Ascending aorta (tissue), 2 donors: ENCODE measurements at regions of chr2 and their contacts with region 1.

Region 1: DNA sequence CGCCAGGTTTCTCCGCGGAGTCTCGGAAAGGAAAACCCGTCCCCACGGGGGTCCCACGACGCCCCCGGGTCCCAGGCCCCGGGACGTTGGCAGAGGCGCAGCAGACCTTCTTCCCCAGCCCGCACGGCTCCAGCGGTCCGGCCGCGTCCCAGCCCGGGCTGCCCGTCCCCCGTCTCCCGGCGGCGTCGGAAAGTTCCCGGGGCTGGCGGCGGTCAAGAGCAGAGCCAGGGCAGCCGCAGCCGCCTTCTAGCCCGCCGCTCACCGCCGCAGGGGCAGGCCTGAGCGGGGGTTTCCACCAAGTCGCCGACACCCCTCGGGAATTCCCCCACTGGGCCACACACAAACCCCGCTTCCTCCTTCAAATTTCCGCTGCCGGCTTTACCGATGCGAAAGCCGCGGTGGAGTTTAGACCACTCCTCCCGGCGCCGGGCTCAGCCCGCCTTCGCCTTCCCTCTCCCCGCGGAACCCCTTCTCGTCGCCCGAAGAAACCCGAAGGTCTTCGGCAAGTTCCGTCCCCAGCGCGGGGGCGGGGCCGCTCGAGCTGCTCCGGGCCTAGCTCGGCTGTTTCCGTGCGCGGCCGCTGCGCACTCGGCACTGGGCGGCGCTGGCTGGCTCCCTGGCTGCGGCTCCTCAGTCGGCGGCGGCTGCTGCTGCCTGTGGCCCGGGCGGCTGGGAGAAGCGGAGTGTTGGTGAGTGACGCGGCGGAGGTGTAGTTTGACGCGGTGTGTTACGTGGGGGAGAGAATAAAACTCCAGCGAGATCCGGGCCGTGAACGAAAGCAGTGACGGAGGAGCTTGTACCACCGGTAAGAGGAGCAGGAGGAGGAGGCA is at the start of gene CREB1:
- DNase-seq: peak; percentile 97 to 99
- H3K4me3 ChIP-seq: peak within 1 kb of the TSS; percentile 80 to 95
- H3K27ac ChIP-seq: peak within 1 kb of the TSS; percentile 96 to 97
- H3K4me1 ChIP-seq: peaks cover 7 to 30% of the 10 kb centered on the region in 2 donors
- H3K27me3 ChIP-seq: no peaks in the 10 kb centered on the region
- CTCF ChIP-seq: peak in 1 of 3 experiments; percentile 1
- total RNA-seq, gene CREB1: 12.8 TPM

Region 2: GRCh38 chr2:206159346-206160124 is 1370.0 kb before region 1 on chr2 and contains the starts of genes EEF1B2 and NDUFS1:
- intact Hi-C with region 1: loop called (anchors 5 kb)
- DNase-seq: peak; percentile 86 to 98
- H3K4me3 ChIP-seq: peak within 1 kb of the TSS; percentile 77 to 89
- H3K27ac ChIP-seq: peak within 1 kb of the TSS; percentile 92 to 93
- H3K4me1 ChIP-seq: peaks cover 0 to 21% of the 10 kb centered on the region in 2 donors
- H3K27me3 ChIP-seq: no peaks in the 10 kb centered on the region
- CTCF ChIP-seq: no peak
- total RNA-seq, gene EEF1B2: 229 TPM
- total RNA-seq, gene NDUFS1: 16.4 TPM

Region 3: GRCh38 chr2:207133820-207134519 is 395.6 kb before region 1 on chr2:
- intact Hi-C with region 1: loop called (anchors 5 kb)
- DNase-seq: peak; percentile 61 to 95
- H3K4me3 ChIP-seq: peak overlapping the region in 1 of 2 donors; percentile 33
- H3K27ac ChIP-seq: peak overlapping the region; percentile 82 to 89
- H3K4me1 ChIP-seq: peaks cover 12 to 74% of the 10 kb centered on the region in 2 donors
- H3K27me3 ChIP-seq: no peaks in the 10 kb centered on the region
- CTCF ChIP-seq: no peak

Region 4: DNA sequence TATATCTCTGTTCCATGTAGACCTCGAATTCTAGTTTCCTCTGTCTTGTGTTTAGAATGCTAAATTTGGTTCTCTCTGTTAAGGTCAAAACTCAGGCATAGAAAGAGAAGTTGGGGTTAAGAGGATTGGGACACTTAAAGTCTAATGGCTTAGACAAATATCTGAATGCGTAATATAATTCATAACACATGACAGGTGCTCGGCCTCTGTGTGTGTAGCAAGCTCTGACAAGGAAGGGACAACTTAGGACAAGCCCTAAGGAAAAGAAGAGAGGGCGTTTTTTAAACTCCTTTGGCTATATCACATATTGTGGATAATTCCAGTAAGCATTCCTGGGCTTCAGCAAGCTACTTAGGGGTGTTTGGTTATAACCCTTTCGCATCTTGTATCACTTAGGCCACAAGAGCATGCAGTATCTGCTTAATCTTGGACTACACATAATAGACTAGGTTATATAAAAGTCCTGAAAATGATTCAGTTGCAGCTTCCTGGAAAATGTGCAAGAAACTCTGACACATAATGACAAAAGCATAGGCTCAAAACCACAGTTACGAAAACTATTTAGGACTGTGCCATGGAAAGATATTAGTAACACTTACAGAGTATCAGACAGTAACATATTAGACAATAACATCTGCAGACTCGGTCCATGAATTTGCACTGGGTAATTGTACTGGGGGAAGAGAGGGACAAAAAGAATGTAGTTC is 15.8 kb before region 1 on chr2:
- intact Hi-C with region 1: loop called (anchors 2 kb)
- DNase-seq: no peak
- H3K4me3 ChIP-seq: peak overlapping the region in 1 of 2 donors; percentile 6
- H3K27ac ChIP-seq: peak overlapping the region in 1 of 2 donors; percentile 69
- H3K4me1 ChIP-seq: peaks cover 3 to 5% of the 10 kb centered on the region in 2 donors
- H3K27me3 ChIP-seq: no peaks in the 10 kb centered on the region
- CTCF ChIP-seq: no peak

Region 5: DNA sequence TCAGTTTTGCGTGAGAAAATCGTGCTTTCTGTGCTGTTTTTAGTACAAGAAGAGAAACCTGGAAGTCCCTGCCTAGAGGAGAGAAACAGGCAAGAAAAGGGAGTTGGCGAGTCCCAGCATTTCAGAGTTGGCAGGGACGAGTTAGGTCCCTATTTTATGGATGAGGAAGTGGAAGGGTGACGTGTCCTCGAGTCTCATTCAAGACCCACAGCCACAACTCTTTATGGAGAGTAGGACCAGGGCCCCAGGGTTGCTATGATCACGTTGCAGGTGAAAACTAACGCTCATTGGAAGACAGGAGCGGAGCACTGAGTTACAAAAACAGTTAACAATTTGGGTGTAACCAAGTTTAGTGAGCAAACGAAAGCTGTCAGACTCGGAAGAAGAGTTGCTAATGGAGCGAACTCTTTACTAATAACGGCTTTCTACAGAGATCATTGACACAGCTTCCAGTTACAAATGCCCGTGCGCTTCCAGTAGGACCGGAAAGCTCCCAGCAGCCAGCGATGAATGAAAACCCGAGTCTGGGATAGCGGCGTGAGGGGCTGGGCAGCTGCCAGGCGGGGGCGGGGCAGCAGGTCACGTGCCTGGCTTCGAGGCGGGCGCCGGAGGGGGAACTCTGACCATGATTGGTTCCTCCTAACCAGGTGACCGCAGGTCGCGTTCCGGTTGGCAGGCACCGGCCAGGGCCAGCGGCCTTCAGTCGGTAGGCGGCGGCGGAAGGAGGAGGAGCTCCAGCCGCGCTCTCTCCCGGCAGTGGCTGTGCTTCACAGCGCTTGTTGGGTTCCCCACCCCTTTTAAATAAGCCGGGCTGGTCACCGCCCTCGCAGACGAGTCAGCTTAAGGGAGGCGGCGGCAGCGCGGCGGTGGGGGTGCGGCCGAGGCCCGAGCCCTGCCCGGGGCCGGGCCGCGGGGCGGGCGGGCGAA is 181.5 kb after region 1 on chr2 and contains the start of gene CCNYL1:
- intact Hi-C with region 1: loop called (anchors 1 kb)
- DNase-seq: peak; percentile 95 to 99
- H3K4me3 ChIP-seq: peak within 1 kb of the TSS; percentile 75 to 92
- H3K27ac ChIP-seq: peak within 1 kb of the TSS; percentile 88 to 90
- H3K4me1 ChIP-seq: peaks cover 0 to 6% of the 10 kb centered on the region in 2 donors
- H3K27me3 ChIP-seq: no peaks in the 10 kb centered on the region
- CTCF ChIP-seq: peak; percentile 17 to 55 (median 17)
- total RNA-seq, gene CCNYL1: 12.3 TPM